Cardiac septum (tissue), 1 donor: ENCODE measurements at regions of chr11 and their contacts with region 1.

Region 1: DNA sequence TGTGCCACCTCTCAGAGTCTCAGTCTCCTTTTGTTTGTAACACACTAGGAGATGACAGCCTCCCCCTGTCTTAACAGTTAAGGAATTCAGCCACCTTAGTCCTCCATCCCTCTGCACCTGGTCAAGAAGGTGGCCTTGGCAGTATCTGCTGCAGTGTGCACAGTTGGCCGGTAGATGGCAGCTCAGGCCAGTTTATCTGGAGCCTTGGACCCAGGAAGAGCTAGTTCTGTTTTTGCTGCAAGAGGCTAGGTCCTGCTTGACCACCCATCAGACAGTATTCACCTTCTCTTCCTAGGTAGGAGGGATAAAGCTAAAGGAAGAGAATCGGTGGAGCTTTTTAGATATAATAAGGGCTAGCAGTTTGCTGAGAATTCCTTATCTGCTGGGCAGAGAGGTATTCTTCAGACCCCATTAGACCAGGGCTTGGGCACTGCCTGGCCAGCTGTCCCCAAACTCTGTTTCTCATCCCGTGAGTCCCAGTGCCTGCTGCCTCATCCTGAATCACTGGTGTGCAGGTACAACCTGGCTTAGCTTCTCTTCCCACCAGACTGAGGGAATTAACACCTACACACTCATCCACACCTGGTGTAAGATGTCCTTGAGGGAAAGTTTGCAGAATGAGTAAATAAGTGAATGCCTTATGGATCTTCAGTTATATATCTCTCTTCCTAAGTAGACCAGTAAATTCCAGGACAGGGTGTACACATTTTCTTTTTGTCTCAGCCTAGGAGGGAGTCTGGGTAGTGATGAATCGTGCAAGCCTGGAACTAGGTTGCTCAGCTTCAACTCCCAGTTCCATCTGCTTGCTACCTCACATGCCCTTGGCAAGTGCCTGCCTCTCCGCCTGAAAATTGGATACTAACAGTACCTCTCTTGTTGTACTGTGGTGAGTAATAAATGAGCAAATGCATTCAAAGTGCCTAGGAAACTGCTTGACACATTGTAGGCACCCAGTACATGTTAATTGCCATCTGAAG is 70.8 kb upstream of the NARS2 start:
- DNase-seq: no peak

Region 2: GRCh38 chr11:78432058-78432515 is 213.4 kb before region 1 on chr11:
- intact Hi-C with region 1: no loop called
- DNase-seq: no peak

Region 3: GRCh38 chr11:78698612-78699011 is 53.1 kb after region 1 on chr11:
- intact Hi-C with region 1: no loop called
- DNase-seq: peak; percentile 82

Region 4: GRCh38 chr11:78961247-78961646 is 315.7 kb after region 1 on chr11:
- intact Hi-C with region 1: loop called (anchors 5 kb)
- DNase-seq: no peak

Region 5: GRCh38 chr11:79052544-79052943 is 407.0 kb after region 1 on chr11:
- intact Hi-C with region 1: loop called (anchors 5 kb)
- DNase-seq: no peak

Region 6: GRCh38 chr11:79076526-79077115 is 431.1 kb after region 1 on chr11:
- intact Hi-C with region 1: loop called (anchors 5 kb)
- DNase-seq: peak; percentile 73

Region 7: DNA sequence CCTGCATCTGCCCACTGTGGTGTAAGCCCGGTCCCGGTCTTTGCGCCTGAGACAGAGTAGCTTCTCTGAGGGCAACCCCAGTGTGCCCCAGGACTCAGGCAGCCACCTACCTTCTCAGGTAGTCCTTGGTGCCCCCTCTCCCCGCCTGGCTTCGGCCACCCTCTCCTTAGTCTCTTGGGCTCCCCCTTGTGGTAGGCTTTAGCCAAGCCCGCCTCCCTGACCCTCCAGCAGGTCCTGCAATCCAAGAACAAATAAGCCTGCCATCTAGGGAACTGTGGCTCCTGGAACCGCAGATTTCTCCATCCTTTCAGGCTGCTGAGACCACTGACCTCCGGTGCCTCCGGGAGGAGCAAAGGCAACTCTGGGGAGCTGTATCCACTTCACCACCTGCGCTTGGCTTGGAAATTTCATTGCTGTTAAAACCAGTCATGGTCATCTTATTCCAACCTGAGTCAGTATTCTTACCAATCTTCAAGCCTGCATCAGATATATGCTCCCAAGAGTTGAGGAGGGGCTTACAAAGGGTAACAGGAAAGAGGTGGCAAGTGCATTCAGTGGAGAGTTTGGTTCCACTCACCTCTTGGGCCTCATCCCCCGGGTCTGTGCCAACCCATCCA is 848.1 kb after region 1 on chr11:
- intact Hi-C with region 1: loop called (anchors 5 kb)
- DNase-seq: peak; percentile 79

Region 8: DNA sequence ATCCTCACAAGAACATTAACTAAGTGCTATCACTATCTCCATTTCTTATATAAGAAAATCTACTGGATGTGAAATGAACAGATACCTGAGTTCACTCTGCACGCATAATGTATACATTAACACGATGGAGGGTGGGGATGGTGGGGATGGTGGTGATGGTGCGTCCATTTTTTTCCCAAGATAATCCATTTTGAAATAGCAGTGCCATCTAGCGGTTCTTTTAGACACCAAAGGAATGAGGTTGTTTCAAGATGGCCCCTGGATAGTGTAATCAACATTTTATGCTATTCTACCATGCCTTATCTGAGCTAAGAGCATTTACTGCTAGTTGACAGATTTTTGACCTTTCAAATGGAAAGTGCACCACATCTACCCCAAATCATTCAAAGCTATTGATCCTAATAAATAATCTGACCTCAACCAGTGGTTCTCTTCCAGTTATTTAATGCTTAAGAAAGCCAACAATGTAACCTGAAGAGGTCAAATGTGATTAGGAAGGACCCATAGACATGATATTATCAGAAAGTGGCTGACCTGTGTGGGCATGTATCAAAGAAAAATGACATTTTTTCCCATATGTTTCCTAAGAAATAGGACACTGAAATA is 1510.0 kb after region 1 on chr11:
- intact Hi-C with region 1: loop called (anchors 10 kb)
- DNase-seq: no peak